HCT116 (cell line): ENCODE measurements at regions of chr2 and their contacts with region 1.

Region 1: GRCh38 chr2:225660262-225661131 is 261.0 kb downstream of the NYAP2 start:
- DNase-seq: peak; percentile 50
- ATAC-seq: peak; percentile 84
- H3K4me3 ChIP-seq: no peak overlapping the region
- H3K27ac ChIP-seq: no peak overlapping the region
- H3K4me1 ChIP-seq: no peaks in the 10 kb centered on the region; a peak in 1 of 4 replicates
- H3K27me3 ChIP-seq: no peaks in the 10 kb centered on the region
- CTCF ChIP-seq: peak; percentile 84 to 96 (median 87)
- POLR2A ChIP-seq: no peak
- RAD21 ChIP-seq: peak; percentile 95

Region 2: DNA sequence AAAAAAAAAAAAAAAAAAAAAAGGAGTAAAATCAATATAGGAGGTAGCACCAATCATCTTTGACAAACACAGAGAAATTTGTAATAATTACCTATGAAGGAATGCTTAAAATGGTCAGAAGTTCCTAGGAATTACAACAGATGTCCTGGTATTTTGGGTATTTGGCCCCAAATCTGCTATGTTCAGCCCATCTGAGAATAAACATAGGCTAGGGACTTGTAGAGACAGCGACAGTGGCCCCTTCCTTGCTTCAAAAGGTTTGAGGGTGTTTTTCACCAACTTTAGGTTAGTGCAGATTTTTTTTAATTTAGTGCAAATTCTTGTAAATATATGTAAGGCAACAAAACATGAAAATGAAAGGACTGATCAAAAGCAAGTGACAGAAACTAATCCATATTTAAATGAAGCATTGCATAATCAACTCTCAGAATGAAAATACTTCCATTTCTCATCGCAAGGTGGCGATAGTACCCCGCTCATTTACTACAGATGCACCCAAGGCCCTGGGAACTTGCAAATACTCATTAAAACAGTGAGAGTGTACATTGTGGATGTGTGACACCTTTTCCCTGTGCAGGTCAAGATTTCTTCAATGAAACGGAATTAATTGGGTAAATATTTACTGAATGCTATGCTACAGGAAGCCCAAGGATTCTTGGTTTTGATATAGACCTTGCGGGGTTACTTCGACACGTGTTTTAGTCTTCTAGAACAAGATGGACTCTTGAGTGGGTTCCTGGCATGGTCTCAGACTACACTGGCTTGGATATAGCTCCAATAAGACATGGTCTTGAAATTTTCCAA is 1303.2 kb before region 1 on chr2:
- CTCF ChIA-PET with region 1: no interaction called
- POLR2A ChIA-PET with region 1: no interaction called
- RAD21 ChIA-PET with region 1: no interaction called
- intact Hi-C with region 1: loop called (anchors 5 kb)
- DNase-seq: peak; percentile 44
- ATAC-seq: peak; percentile 83
- H3K4me3 ChIP-seq: no peak overlapping the region
- H3K27ac ChIP-seq: no peak overlapping the region
- H3K4me1 ChIP-seq: 0 out of 4 replicates have a peak, but pooled peaks cover 0 to 4% of the 10 kb centered on the region in 2 experiments
- H3K27me3 ChIP-seq: no peaks in the 10 kb centered on the region
- CTCF ChIP-seq: peak; percentile 62 to 91 (median 85); a peak in 5 of 6 replicates
- POLR2A ChIP-seq: no peak
- RAD21 ChIP-seq: peak; percentile 92

Region 3: DNA sequence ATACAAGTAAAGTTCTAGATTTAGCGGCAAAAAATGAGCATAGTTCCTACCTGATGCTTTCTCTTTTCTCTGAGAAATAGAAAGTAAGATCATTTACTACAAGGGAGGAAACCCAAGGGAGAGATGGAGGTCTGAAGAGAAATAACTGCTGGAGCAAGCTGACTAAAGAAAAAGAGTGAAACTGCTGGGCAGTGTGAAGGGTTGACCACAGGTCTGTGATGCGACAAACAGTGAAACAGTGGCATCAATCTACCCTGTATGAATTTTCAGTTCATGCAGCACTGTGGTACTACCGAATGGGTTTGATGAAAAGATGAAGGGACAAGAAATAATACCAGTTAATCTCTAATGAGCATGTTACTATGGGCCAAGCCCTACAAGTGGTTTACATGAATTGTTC is 1127.6 kb before region 1 on chr2:
- CTCF ChIA-PET with region 1: no interaction called
- POLR2A ChIA-PET with region 1: no interaction called
- RAD21 ChIA-PET with region 1: no interaction called
- intact Hi-C with region 1: no loop called
- DNase-seq: no peak
- ATAC-seq: no peak
- H3K4me3 ChIP-seq: no peak overlapping the region
- H3K27ac ChIP-seq: no peak overlapping the region
- H3K4me1 ChIP-seq: no peaks in the 10 kb centered on the region
- H3K27me3 ChIP-seq: no peaks in the 10 kb centered on the region
- CTCF ChIP-seq: no peak
- POLR2A ChIP-seq: no peak
- RAD21 ChIP-seq: no peak

Region 4: DNA sequence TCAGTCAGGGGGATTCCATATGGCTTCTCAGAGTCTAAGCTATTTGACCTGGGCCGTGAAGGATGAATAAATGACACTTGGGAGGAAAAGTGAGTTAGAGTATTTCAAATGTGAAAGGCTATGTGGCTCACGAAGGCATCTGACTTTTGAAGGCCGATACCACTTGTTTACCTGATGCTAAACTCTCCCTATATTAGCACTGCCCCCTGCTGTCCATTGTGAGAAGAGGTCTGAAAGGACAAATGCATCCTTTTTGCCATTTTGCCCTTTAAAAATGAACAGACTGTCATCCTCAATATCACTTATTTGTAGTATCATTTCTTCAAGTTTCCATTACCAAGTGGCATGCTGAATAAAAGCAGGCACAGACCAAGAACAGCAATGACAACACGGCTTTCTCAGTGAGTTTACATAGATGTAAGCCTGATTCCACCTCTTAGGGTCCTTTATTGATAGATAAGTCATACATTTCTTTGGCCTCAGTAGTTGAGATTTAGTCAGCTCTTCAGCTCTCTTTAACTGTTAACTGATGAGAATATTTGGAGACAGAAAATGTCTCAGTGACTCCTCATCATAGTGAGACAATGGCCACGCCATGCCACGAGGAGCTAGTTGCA is 658.4 kb before region 1 on chr2:
- CTCF ChIA-PET with region 1: interaction called, 5 read pairs
- POLR2A ChIA-PET with region 1: interaction called, 3 read pairs
- RAD21 ChIA-PET with region 1: no interaction called
- intact Hi-C with region 1: loop called (anchors 1 kb)
- DNase-seq: peak; percentile 43
- ATAC-seq: peak; percentile 86
- H3K4me3 ChIP-seq: no peak overlapping the region
- H3K27ac ChIP-seq: no peak overlapping the region
- H3K4me1 ChIP-seq: no peaks in the 10 kb centered on the region
- H3K27me3 ChIP-seq: no peaks in the 10 kb centered on the region
- CTCF ChIP-seq: peak; percentile 74 to 79 (median 76)
- POLR2A ChIP-seq: no peak
- RAD21 ChIP-seq: peak; percentile 87

Region 5: DNA sequence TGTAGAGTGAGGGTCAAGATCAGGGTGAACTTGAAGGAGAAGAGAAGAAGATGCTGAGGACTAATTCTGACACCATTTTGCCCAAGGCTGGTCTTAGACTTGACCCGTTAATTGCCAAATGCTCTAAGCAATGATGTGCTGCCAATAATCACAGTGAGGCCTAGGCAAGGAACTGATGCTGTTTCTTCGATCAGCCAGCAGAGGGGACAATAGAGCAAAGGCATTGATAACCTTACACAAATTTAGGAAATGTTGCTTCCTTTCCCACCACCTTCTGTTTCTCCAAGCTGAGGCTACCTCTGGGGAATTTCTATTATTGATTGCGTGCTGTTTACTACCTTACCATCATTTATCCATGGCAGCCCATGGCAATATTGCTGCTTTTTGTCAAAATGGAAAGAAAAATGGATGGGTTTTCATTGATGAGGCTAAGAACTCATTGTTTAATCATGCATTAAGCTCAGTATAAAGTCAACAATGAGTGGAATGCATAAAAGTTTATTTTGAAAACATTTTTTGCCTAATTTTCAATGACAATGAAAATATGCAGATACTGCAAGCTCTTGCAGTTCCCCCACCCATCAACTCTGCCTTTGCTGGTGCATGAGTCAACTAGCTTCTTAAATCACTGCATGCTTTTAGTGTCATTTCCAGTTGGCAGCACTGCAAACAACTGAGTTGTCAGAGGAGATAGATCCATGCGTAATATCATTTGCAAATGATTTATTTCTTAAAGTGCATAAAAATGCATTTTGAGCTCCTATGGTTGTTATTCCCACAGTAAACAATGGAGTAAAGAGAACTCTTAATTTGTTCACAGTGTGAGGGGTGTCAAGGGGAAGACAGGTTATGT is 377.4 kb before region 1 on chr2:
- CTCF ChIA-PET with region 1: interaction called, 11 read pairs
- POLR2A ChIA-PET with region 1: no interaction called
- RAD21 ChIA-PET with region 1: no interaction called
- intact Hi-C with region 1: loop called (anchors 1 kb)
- DNase-seq: peak; percentile 31
- ATAC-seq: peak; percentile 87
- H3K4me3 ChIP-seq: no peak overlapping the region
- H3K27ac ChIP-seq: no peak overlapping the region
- H3K4me1 ChIP-seq: no peaks in the 10 kb centered on the region
- H3K27me3 ChIP-seq: no peaks in the 10 kb centered on the region
- CTCF ChIP-seq: peak; percentile 52 to 83 (median 79); a peak in 5 of 6 replicates
- POLR2A ChIP-seq: no peak
- RAD21 ChIP-seq: peak; percentile 71

Region 6: GRCh38 chr2:225616370-225616769 is 44.1 kb before region 1 on chr2:
- CTCF ChIA-PET with region 1: no interaction called
- POLR2A ChIA-PET with region 1: no interaction called
- RAD21 ChIA-PET with region 1: no interaction called
- intact Hi-C with region 1: no loop called
- DNase-seq: no peak
- ATAC-seq: no peak
- H3K4me3 ChIP-seq: no peak overlapping the region
- H3K27ac ChIP-seq: no peak overlapping the region
- H3K4me1 ChIP-seq: no peaks in the 10 kb centered on the region
- H3K27me3 ChIP-seq: no peaks in the 10 kb centered on the region
- CTCF ChIP-seq: no peak
- POLR2A ChIP-seq: no peak
- RAD21 ChIP-seq: no peak

Region 7: GRCh38 chr2:226057914-226058313 is 397.4 kb after region 1 on chr2:
- CTCF ChIA-PET with region 1: no interaction called
- POLR2A ChIA-PET with region 1: no interaction called
- RAD21 ChIA-PET with region 1: no interaction called
- intact Hi-C with region 1: no loop called
- DNase-seq: no peak
- ATAC-seq: peak; percentile 19; the same call in 1 of the 2 replicates
- H3K4me3 ChIP-seq: no peak overlapping the region
- H3K27ac ChIP-seq: peak overlapping the region; percentile 99
- H3K4me1 ChIP-seq: peaks cover 42 to 73% of the 10 kb centered on the region in 2 experiments
- H3K27me3 ChIP-seq: no peaks in the 10 kb centered on the region
- CTCF ChIP-seq: no peak
- POLR2A ChIP-seq: no peak
- RAD21 ChIP-seq: no peak

Region 8: GRCh38 chr2:226984750-226985582 is 1324.5 kb after region 1 on chr2:
- CTCF ChIA-PET with region 1: interaction called, 11 read pairs
- POLR2A ChIA-PET with region 1: no interaction called
- RAD21 ChIA-PET with region 1: interaction called in 1 of 2 experiments, 3 read pairs
- intact Hi-C with region 1: no loop called
- DNase-seq: peak; percentile 56
- ATAC-seq: peak; percentile 65
- H3K4me3 ChIP-seq: no peak overlapping the region
- H3K27ac ChIP-seq: peak overlapping the region; percentile 57
- H3K4me1 ChIP-seq: peaks cover 47 to 50% of the 10 kb centered on the region in 2 experiments
- H3K27me3 ChIP-seq: no peaks in the 10 kb centered on the region
- CTCF ChIP-seq: peak; percentile 56 to 83 (median 68); a peak in 5 of 6 replicates
- POLR2A ChIP-seq: no peak
- RAD21 ChIP-seq: peak; percentile 95